CD8-positive, alpha-beta T cell (primary cell): ENCODE measurements at regions of chr10 and their contacts with region 1.

Region 1: DNA sequence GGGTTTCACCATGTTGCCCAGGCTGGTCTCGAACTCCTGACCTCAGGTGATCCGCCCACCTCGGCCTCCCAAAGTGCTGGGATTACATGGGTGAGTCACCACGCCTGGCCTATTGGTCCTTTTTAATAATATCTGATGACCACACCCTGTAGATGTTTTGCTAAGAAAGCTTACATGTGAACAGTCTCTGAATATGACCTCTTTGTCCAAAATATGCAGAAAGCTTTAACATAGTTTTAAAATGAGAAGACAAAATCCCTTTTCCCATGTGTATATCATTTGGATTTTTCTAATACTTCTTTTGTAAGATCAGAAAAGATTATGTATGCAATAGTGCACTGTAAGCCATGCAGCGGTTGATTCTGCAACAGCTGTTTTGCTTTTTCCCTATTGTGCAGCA is 38.5 kb downstream of the MCU start:
- DNase-seq: no peak
- ATAC-seq: no peak
- H3K4me3 ChIP-seq: no peak overlapping the region
- H3K4me3 Mint-ChIP-seq: no peak overlapping the region
- H3K27ac ChIP-seq: no peak overlapping the region
- H3K27ac Mint-ChIP-seq: no peak overlapping the region
- H3K4me1 ChIP-seq: no peaks in the 10 kb centered on the region
- H3K4me1 Mint-ChIP-seq: peaks cover 9% of the 10 kb centered on the region
- H3K27me3 ChIP-seq: no peaks in the 10 kb centered on the region
- H3K27me3 Mint-ChIP-seq: no peaks in the 10 kb centered on the region
- CTCF ChIP-seq: no peak

Region 2: GRCh38 chr10:72509206-72509799 is 221.2 kb before region 1 on chr10:
- CTCF ChIA-PET with region 1: no interaction called
- POLR2A ChIA-PET with region 1: no interaction called
- intact Hi-C with region 1: no loop called
- DNase-seq: no peak
- ATAC-seq: no peak
- H3K4me3 ChIP-seq: no peak overlapping the region
- H3K4me3 Mint-ChIP-seq: no peak overlapping the region
- H3K27ac ChIP-seq: no peak overlapping the region
- H3K27ac Mint-ChIP-seq: no peak overlapping the region
- H3K4me1 ChIP-seq: no peaks in the 10 kb centered on the region
- H3K4me1 Mint-ChIP-seq: no peaks in the 10 kb centered on the region
- H3K27me3 ChIP-seq: no peaks in the 10 kb centered on the region
- H3K27me3 Mint-ChIP-seq: no peaks in the 10 kb centered on the region
- CTCF ChIP-seq: no peak

Region 3: GRCh38 chr10:72653383-72654096 is 76.9 kb before region 1 on chr10:
- CTCF ChIA-PET with region 1: no interaction called
- POLR2A ChIA-PET with region 1: no interaction called
- intact Hi-C with region 1: loop called in 1 of 2 experiments (anchors 2 kb)
- DNase-seq: no peak
- ATAC-seq: no peak
- H3K4me3 ChIP-seq: no peak overlapping the region
- H3K4me3 Mint-ChIP-seq: no peak overlapping the region
- H3K27ac ChIP-seq: no peak overlapping the region
- H3K27ac Mint-ChIP-seq: no peak overlapping the region
- H3K4me1 ChIP-seq: no peaks in the 10 kb centered on the region
- H3K4me1 Mint-ChIP-seq: no peaks in the 10 kb centered on the region
- H3K27me3 ChIP-seq: no peaks in the 10 kb centered on the region
- H3K27me3 Mint-ChIP-seq: no peaks in the 10 kb centered on the region
- CTCF ChIP-seq: no peak